A673 (cell line): ENCODE measurements at regions of chr4 and their contacts with region 1.

Region 1: GRCh38 chr4:112448306-112449132 is 67.5 kb downstream of the NEUROG2 start:
- DNase-seq: peak; percentile 6
- H3K4me3 ChIP-seq: no peak overlapping the region
- H3K27ac ChIP-seq: no peak overlapping the region
- H3K4me1 ChIP-seq: no peaks in the 10 kb centered on the region
- H3K27me3 ChIP-seq: no peaks in the 10 kb centered on the region
- CTCF ChIP-seq: no peak

Region 2: GRCh38 chr4:112348488-112349158 is 99.9 kb before region 1 on chr4:
- CTCF ChIA-PET with region 1: no interaction called
- POLR2A ChIA-PET with region 1: no interaction called
- intact Hi-C with region 1: no loop called
- DNase-seq: peak; percentile 63
- H3K4me3 ChIP-seq: no peak overlapping the region
- H3K27ac ChIP-seq: no peak overlapping the region
- H3K4me1 ChIP-seq: peaks cover 28% of the 10 kb centered on the region
- H3K27me3 ChIP-seq: no peaks in the 10 kb centered on the region
- CTCF ChIP-seq: peak; percentile 43

Region 3: DNA sequence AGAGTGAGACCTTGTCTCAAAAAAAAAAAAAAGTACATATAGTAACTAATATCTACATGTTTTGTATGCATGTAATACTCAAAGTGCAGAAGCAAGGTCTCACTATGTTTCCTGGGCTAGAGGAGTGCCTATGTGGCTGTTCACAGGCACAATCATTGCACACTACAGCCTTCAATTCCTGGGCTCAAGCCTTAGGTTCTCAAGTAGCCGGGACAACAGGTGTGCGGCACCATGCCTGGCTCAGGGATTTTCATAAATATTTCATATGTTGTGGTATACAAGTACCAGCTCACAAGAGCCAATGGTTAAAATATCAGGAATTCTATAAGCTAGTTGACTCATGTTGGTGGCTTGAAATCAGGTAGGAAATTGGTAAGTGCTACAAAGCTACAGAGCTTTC is 283.2 kb after region 1 on chr4:
- CTCF ChIA-PET with region 1: no interaction called
- POLR2A ChIA-PET with region 1: interaction called, 14 read pairs
- intact Hi-C with region 1: no loop called
- DNase-seq: no peak
- H3K4me3 ChIP-seq: no peak overlapping the region
- H3K27ac ChIP-seq: no peak overlapping the region
- H3K4me1 ChIP-seq: peaks cover 5% of the 10 kb centered on the region
- H3K27me3 ChIP-seq: no peaks in the 10 kb centered on the region
- CTCF ChIP-seq: no peak

Region 4: DNA sequence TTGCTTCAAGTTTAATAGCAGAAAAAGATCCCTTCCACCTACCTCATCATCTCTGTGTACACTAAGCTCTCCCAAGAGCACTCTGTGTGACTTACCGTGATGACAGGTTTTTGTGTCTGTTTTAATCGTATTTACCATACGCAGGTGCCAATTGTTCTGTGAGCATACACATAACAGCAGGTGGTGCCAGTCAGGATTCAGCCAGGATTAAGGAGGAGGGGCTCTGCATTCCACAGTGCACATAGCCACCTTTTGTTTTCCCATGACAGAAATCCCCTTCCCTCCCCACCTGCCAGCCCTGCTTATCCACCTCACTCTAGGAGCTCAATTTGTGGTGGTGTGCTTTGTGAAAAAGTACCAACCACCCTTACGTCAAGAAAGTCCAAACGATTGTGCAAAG is 615.7 kb after region 1 on chr4:
- CTCF ChIA-PET with region 1: no interaction called
- POLR2A ChIA-PET with region 1: no interaction called
- intact Hi-C with region 1: no loop called
- DNase-seq: no peak
- H3K4me3 ChIP-seq: no peak overlapping the region
- H3K27ac ChIP-seq: no peak overlapping the region
- H3K4me1 ChIP-seq: no peaks in the 10 kb centered on the region
- H3K27me3 ChIP-seq: no peaks in the 10 kb centered on the region
- CTCF ChIP-seq: no peak